ENCODE measurements at regions of chr9 and their contacts with region 1.

Region 1: GRCh38 chr9:34646211-34647083 is at the start of gene GALT:
- DNase-seq: peak; percentile 87 to 98 (median 94)
- ATAC-seq: peak; percentile 89 to 90
- H3K4me3 Mint-ChIP-seq: peak within 1 kb of the TSS; percentile 91 to 96 (median 93)
- H3K27ac Mint-ChIP-seq: peak within 1 kb of the TSS; percentile 85 to 95 (median 92)
- H3K4me1 Mint-ChIP-seq: peaks cover 24 to 42% (median 31%) of the 10 kb centered on the region in 4 donors
- H3K27me3 Mint-ChIP-seq: no peaks in the 10 kb centered on the region
- polyA plus RNA-seq, gene GALT: 38.2 to 46.7 (median 42.0) TPM

Region 2: DNA sequence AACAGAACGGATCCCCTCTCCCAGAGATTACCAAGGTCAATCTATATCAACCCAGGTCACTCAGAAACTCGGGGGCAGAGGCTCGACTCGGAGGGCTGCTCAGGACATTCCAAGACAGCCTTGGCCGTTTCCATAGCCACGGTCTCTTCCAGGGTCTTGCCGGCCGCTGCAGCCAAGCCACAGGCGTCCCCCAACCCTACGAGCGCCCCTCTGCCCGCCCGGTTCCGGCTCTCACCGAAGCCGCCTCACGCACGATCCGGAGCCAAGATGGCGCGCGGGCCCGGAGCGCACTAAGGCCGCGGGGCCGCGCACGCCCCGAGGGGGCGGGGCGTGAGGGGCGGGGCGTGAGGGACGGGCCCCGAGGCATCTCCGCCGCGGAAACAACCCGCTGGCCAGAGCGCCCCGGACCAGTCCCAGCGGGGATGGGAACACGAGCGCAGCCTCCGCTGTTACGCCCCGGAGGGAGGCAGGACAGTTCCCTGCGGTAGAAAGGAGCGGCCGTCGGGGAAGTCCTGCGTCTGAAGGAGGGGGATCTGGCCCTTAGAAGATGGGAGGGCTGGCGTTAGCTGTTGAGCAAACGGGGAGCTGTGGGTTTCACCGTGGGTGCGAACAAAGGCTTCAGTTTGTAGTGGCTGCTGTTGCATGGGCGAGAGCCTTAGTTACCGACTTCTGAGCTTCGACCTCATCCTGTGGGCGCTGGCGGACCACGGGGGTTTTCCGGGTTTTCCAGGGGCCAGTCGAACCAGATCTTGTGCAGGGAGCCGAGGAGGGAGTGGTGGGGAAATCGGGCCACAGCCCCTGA is 34.4 kb before region 1 on chr9 and contains the start of gene RPP25L:
- POLR2A ChIA-PET with region 1: interaction called, 17 read pairs
- DNase-seq: peak; percentile 72 to 92 (median 84)
- ATAC-seq: peak; percentile 86 to 87
- H3K4me3 Mint-ChIP-seq: peak within 1 kb of the TSS; percentile 88 to 95 (median 92)
- H3K27ac Mint-ChIP-seq: peak within 1 kb of the TSS; percentile 77 to 99 (median 95)
- H3K4me1 Mint-ChIP-seq: peaks cover 11 to 31% (median 22%) of the 10 kb centered on the region in 4 donors
- H3K27me3 Mint-ChIP-seq: no peaks in the 10 kb centered on the region
- polyA plus RNA-seq, gene RPP25L: 28.7 to 51.7 (median 45.1) TPM

Region 3: DNA sequence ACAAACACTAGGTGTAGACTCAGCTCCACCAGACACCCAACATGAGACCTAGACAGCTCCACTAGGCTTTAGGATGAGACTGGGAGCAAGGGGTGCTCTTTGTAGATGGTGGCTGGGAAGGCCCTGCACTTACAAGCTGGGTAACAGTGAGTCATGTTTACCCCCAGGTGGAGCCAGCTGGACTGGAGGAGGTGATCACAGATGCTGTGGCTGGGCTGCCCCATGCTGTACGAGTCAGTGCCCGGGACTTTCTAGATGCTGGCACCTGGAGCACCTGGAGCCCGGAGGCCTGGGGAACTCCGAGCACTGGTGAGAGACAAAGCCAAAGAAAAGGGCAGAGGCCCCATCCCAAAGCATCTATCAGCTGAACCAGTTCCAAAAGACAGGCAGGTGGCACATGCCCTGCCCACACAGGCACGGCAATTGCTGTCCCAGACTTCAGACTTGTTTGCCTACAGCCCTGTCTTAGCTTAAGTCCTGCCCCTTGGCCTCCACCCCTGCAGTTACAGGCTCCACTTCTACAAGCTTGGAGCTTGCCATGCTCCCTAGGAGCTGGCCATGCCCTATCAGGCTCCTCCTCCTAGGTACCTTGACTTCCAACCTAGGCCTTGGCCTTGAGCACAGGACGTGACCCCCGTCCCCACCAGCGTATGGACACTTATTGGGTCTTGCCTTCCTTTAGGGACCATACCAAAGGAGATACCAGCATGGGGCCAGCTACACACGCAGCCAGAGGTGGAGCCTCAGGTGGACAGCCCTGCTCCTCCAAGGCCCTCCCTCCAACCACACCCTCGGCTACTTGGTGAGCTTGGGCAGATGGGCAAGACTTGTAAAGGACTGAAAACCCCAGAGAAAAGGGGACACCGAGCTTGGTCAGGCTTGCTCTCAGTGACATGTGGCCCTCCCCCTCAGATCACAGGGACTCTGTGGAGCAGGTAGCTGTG is 13.4 kb after region 1 on chr9:
- POLR2A ChIA-PET with region 1: interaction called, 39 read pairs
- DNase-seq: no peak
- ATAC-seq: no peak
- H3K4me3 Mint-ChIP-seq: peak overlapping the region in 1 of 10 donors; percentile 29
- H3K27ac Mint-ChIP-seq: peak overlapping the region in 1 of 10 donors; percentile 0
- H3K4me1 Mint-ChIP-seq: peaks cover 29 to 36% (median 32%) of the 10 kb centered on the region in 4 donors
- H3K27me3 Mint-ChIP-seq: no peaks in the 10 kb centered on the region

Region 4: GRCh38 chr9:34665381-34666250 is 19.2 kb after region 1 on chr9:
- POLR2A ChIA-PET with region 1: interaction called, 39 read pairs
- DNase-seq: peak; percentile 77 to 94 (median 86)
- ATAC-seq: peak; percentile 75 to 78
- H3K4me3 Mint-ChIP-seq: peak overlapping the region; percentile 82 to 96 (median 90)
- H3K27ac Mint-ChIP-seq: peak overlapping the region; percentile 74 to 99 (median 98)
- H3K4me1 Mint-ChIP-seq: peaks cover 30 to 59% (median 40%) of the 10 kb centered on the region in 4 donors
- H3K27me3 Mint-ChIP-seq: no peaks in the 10 kb centered on the region

Region 5: DNA sequence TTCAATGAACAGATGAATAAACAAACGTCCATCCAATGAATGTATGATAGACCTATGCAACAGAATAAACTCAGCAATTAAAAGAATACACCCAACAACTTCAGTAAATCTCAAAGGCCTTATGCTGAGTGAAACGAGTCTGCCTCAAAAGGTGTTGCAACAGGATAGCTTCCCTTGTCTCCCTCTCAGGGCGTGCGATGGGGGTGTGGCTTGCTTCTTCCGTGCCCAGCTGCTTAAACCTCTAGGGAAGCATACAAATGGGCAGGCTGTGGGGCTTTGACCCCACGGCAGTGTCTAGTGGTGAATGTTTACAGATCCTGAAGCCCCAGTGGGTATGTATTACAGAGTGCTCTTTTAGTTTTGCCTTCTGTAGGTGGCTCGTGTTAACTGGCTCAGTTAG is 150.5 kb after region 1 on chr9:
- POLR2A ChIA-PET with region 1: no interaction called
- DNase-seq: no peak
- ATAC-seq: no peak
- H3K4me3 Mint-ChIP-seq: no peak overlapping the region
- H3K27ac Mint-ChIP-seq: no peak overlapping the region
- H3K4me1 Mint-ChIP-seq: no peaks in the 10 kb centered on the region
- H3K27me3 Mint-ChIP-seq: peaks cover 38 to 78% (median 49%) of the 10 kb centered on the region in 5 donors

Measured in naive thymus-derived CD8-positive, alpha-beta T cell (primary cell).